Adrenal gland (tissue), 19 donors: ENCODE measurements at regions of chr4 and their contacts with region 1.

Region 1: DNA sequence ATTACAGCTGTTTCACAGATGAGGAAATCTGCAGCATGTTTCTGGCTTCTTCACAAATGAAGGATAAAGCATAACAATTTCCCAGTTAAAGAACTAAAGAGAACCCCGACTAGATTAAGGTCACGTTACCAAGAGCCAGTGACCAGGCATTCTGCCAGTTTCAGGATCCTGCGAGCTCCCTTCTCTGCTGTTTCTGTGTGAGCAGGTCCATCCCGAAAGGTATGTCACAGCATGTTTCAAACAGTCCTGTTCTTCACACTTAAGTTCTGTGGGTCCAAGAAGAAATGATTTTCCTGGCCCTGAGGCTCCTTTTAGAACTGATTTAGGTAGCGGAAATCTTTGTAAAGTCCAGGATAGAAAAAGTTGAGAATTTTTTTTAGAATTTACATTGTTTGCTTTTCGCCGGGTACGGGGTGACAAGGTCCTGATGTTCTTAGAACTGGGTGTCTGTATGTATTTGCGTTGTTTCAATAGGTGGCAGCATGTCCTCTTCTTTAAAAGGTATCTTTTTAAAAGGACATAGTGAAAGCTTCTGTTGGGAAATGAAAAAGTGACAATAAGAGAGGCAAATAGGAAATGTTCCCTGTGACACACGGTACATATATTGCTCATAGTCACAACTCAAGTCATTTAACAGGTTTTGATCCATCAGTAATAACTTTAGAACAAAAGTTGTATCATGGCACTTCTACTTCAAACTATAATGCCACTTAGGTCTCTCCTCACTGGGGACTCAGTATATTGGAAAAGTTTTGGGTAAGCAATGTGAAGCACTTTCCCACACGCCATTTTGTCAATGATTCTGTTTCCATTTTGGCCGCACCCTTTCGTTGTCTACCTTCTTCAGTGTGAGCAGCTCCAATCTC is 18.4 kb downstream of the IL21 start:
- DNase-seq: peak in 2 of 7 donors; percentile 7 to 8
- H3K4me3 ChIP-seq: no peak overlapping the region
- H3K27ac ChIP-seq: no peak overlapping the region
- H3K4me1 ChIP-seq: no peaks in the 10 kb centered on the region
- H3K27me3 ChIP-seq: peaks cover 22% of the 10 kb centered on the region
- CTCF ChIP-seq: peak; percentile 16 to 51 (median 30)
- POLR2A ChIP-seq: no peak

Region 2: GRCh38 chr4:122652379-122652778 is 49.9 kb after region 1 on chr4:
- intact Hi-C with region 1: no loop called
- DNase-seq: peak; percentile 31 to 81 (median 61)
- H3K4me3 ChIP-seq: no peak overlapping the region
- H3K27ac ChIP-seq: no peak overlapping the region
- H3K4me1 ChIP-seq: no peaks in the 10 kb centered on the region
- H3K27me3 ChIP-seq: no peaks in the 10 kb centered on the region
- CTCF ChIP-seq: peak; percentile 37 to 62 (median 46)
- POLR2A ChIP-seq: no peak

Region 3: DNA sequence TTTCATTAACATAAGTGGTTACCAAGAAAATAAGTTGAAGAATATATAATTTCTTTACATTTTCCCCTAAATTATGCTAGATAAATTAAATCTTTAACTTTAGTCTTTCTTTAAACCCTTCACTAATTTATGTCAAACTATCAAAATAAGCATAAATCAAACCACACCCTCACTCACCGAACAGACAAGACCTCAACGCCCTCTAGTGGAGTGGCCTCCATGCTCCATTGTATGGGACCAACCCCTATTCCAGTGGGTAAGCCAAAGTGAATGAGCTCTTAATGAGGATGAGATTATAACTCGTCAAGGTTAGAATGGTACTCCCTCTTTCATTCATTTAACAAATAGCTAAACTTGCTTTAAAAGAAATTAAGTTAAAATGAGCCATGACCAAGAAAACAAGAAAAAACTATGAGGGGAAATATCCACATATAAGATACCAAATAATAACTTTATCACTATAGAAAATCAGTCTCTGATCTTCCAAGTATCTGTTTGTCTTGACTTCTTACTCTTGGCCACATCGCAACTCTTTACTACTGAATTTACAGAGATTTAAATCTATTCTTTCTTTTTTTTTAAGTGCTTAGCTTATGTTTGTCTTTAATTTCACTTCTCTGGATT is 114.4 kb after region 1 on chr4:
- intact Hi-C with region 1: loop called in 1 of 2 experiments (anchors 10 kb)
- DNase-seq: peak; percentile 39 to 80 (median 66)
- H3K4me3 ChIP-seq: no peak overlapping the region
- H3K27ac ChIP-seq: no peak overlapping the region
- H3K4me1 ChIP-seq: no peaks in the 10 kb centered on the region
- H3K27me3 ChIP-seq: no peaks in the 10 kb centered on the region
- CTCF ChIP-seq: peak; percentile 52 to 77 (median 71)
- POLR2A ChIP-seq: no peak

Region 4: DNA sequence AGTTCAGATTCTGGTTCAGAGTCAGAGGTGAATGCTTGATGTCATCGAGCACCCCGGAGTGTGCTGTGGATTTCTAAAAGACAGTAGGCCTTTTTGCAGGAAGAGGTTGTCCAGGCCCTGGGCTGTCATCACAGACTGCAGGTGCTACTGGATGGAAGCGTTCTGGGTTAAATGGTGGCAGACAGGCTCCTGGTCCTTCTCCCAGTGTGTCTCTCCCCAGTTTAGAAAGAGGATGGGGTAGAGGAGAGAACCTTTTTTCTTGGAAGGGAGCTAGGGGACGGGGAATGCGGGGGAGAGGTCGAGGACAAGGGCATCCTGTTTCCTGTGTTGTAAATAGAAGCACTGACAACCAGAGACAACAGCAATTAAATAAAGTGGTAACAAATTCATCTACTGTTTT is 422.2 kb after region 1 on chr4:
- intact Hi-C with region 1: no loop called
- DNase-seq: no peak
- H3K4me3 ChIP-seq: no peak overlapping the region
- H3K27ac ChIP-seq: no peak overlapping the region
- H3K4me1 ChIP-seq: peaks cover 3 to 7% of the 10 kb centered on the region in 2 donors
- H3K27me3 ChIP-seq: no peaks in the 10 kb centered on the region
- CTCF ChIP-seq: no peak
- POLR2A ChIP-seq: no peak